ENCODE measurements at regions of chr9 and their contacts with region 1.

Region 1: DNA sequence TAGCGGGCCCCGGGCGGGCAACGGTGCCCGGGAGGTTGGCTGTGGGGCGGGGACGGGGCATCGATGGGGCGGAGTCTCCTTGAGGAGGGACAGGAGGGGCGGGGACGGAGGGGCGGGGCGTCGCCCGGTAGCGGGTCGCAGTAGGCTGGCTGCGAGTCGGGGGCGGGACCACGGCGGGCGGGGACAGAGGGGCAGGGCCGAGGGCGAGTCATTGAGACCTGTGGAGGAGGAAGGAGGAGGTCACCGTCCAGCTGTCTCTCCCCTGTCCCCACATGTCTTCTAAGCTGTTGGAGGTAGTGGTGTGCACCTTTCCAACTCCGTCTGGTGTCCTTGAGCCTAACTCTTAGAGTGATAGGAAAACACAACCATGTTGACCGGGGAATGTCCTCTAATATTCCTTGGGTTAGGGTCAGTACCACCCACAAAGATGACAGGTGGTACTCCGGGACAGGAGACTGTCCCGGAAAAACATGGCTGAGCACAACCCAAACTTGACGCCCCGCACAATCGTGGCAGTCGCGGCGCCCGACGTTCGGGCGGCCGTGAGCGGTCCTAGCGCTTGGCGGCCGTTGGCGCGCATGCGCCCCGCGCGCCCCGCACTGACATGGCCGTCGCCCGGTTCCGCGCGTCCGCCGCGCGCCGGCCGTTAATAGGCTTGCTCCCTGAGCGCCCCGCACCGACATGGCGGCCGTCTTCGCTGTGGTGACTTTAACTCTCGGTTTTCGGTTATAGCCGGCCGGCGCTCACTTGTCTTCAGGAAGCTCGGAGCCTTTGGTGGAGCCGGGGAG is at the starts of genes CRAT and PTPA:
- DNase-seq: peak; percentile 95
- H3K4me3 ChIP-seq: peak within 1 kb of the TSS; percentile 88
- H3K27ac ChIP-seq: peak within 1 kb of the TSS; percentile 94
- H3K4me1 ChIP-seq: peaks cover 11% of the 10 kb centered on the region
- H3K27me3 ChIP-seq: no peaks in the 10 kb centered on the region
- CTCF ChIP-seq: no peak
- total RNA-seq, gene CRAT: 10.1 and 16.2 TPM in 2 replicates
- total RNA-seq, gene PTPA: 153 and 157 TPM in 2 replicates

Region 2: DNA sequence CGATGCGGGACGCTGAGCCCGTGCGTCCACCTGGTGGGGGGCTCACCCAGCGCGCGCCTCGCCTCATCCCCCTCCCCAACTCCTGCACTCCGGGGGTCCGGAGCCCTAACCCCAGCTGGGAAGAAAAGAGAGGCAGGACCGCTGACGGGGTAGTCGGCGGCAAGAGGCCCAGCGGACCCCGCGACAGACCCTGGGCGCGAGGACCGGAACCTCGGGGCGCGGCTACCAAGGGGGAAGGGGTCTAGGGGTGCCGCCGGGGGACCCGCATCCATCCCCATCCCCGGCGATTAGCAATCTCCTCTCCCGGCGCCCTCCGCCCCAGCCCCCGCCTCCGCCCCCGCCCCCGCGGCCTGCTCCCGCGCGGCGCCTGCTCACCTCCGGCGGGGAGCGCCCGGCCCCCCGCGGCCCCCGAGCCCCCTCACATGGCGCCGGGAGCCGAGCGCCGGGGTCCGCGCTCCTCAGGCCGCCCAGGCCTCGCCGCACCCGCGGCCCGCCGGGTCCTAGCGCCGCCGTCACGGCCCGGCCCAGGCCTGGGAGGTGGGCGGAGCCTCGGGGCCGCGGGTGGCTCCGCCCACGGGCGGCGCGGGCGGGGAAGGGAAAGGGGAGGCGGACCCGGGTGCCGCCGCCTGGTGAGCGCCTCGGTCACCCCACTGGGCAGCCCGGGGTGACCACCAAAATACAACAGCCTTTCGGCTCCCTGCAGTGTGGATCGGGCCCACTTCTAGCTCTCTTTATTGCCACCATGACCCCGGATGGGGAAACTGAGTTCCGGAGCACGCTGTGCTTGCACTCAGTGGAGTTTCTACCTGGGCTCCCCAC is 1211.6 kb before region 1 on chr9 and contains the start of gene ST6GALNAC6:
- CTCF ChIA-PET with region 1: no interaction called
- POLR2A ChIA-PET with region 1: interaction called, 14 read pairs
- intact Hi-C with region 1: no loop called
- DNase-seq: peak; percentile 85
- H3K4me3 ChIP-seq: peak within 1 kb of the TSS; percentile 96
- H3K27ac ChIP-seq: peak within 1 kb of the TSS; percentile 85
- H3K4me1 ChIP-seq: peaks cover 9% of the 10 kb centered on the region
- H3K27me3 ChIP-seq: no peaks in the 10 kb centered on the region
- CTCF ChIP-seq: no peak
- total RNA-seq, gene ST6GALNAC6: 34.7 and 40.4 TPM in 2 replicates

Region 3: DNA sequence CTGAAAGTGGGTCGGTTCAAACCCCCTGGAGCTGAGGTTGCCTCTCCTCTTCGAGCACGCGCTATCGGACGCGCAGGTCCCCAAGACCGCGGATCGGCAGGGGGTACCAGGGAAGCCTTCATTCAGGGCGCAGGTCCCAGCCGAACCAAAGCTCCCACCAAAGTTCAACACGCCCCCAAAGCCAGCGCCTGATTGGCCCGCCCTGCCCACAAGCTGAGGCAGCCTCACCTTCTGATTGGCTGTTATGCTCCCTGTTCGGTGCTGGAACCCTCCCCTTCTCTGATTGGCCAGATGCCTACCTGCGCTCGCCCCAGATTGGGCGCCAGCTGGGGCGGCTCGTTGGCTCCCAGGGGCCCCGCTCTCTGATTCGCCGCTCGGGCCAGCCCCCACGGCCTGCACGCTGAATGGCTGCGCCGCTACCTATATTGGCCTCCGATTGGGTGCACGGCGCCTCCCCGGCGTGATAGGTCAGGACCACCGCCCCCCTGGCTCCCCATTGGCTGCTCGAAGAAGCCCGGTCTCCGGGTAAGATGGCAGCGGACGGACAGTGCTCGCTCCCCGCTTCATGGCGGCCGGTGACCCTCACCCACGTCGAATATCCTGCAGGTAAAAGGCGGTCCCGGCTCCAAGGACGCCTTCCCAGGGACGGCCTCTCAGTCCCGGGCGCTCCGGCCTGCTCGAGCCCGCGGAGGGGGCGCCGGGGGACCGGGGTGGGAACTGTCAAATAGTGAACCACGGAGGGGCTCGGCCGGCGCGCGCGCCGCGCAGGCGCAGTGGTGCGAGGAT is 30.1 kb before region 1 on chr9 and contains the start of gene DOLPP1:
- CTCF ChIA-PET with region 1: no interaction called
- POLR2A ChIA-PET with region 1: no interaction called
- intact Hi-C with region 1: loop called (anchors 2 kb)
- DNase-seq: peak; percentile 100
- H3K4me3 ChIP-seq: peak within 1 kb of the TSS; percentile 82
- H3K27ac ChIP-seq: peak within 1 kb of the TSS; percentile 83
- H3K4me1 ChIP-seq: peaks cover 15% of the 10 kb centered on the region
- H3K27me3 ChIP-seq: no peaks in the 10 kb centered on the region
- CTCF ChIP-seq: no peak
- total RNA-seq, gene DOLPP1: 30.2 and 30.4 TPM in 2 replicates